OCI-LY7 (cell line): ENCODE measurements at regions of chr22 and their contacts with region 1.

Region 1: GRCh38 chr22:19756288-19757128 is 4.1 kb upstream of the TBX1 start:
- DNase-seq: peak; percentile 68
- H3K4me3 ChIP-seq: peak overlapping the region; percentile 3
- H3K27ac ChIP-seq: no peak overlapping the region
- H3K4me1 ChIP-seq: peaks cover 24% of the 10 kb centered on the region
- CTCF ChIP-seq: peak; percentile 75

Region 2: GRCh38 chr22:19779685-19780268 is 23.3 kb after region 1 on chr22:
- CTCF ChIA-PET with region 1: no interaction called
- POLR2A ChIA-PET with region 1: interaction called, 3 read pairs
- intact Hi-C with region 1: loop called (anchors 2 kb)
- DNase-seq: no peak
- H3K4me3 ChIP-seq: no peak overlapping the region
- H3K27ac ChIP-seq: peak overlapping the region; percentile 69
- H3K4me1 ChIP-seq: peaks cover 39% of the 10 kb centered on the region
- CTCF ChIP-seq: no peak

Region 3: GRCh38 chr22:20079745-20080444 is 323.4 kb after region 1 on chr22 and contains the start of gene DGCR8:
- CTCF ChIA-PET with region 1: no interaction called
- POLR2A ChIA-PET with region 1: no interaction called
- intact Hi-C with region 1: no loop called
- DNase-seq: peak; percentile 91
- H3K4me3 ChIP-seq: peak within 1 kb of the TSS; percentile 99
- H3K27ac ChIP-seq: peak within 1 kb of the TSS; percentile 70
- H3K4me1 ChIP-seq: peaks cover 40% of the 10 kb centered on the region
- CTCF ChIP-seq: no peak
- total RNA-seq, gene DGCR8: 49.5 and 53.4 TPM in 2 replicates